ENCODE measurements at regions of chr9 and their contacts with region 1.

Region 1: GRCh38 chr9:91036826-91037510 is 235.3 kb downstream of the SYK start:
- DNase-seq: peak; percentile 66 to 82
- ATAC-seq: peak; percentile 95 to 98
- H3K4me3 ChIP-seq: no peak overlapping the region
- H3K27ac ChIP-seq: peak overlapping the region in 1 of 4 donors; percentile 20
- H3K4me1 ChIP-seq: peaks cover 4 to 17% of the 10 kb centered on the region in 2 donors
- H3K27me3 ChIP-seq: no peaks in the 10 kb centered on the region
- CTCF ChIP-seq: peak; percentile 63 to 85 (median 76)
- POLR2A ChIP-seq: no peak

Region 2: GRCh38 chr9:91117959-91118703 is 81.2 kb after region 1 on chr9:
- in situ Hi-C with region 1: no loop called
- intact Hi-C with region 1: loop called (anchors 5 kb)
- DNase-seq: peak; percentile 84 to 90
- ATAC-seq: peak; percentile 86 to 89
- H3K4me3 ChIP-seq: peak overlapping the region; percentile 41 to 50 (median 42)
- H3K27ac ChIP-seq: peak overlapping the region; percentile 80 to 90 (median 82)
- H3K4me1 ChIP-seq: peaks cover 25 to 32% of the 10 kb centered on the region in 2 donors
- H3K27me3 ChIP-seq: no peaks in the 10 kb centered on the region
- CTCF ChIP-seq: no peak
- POLR2A ChIP-seq: peak; percentile 55 to 70

Region 3: DNA sequence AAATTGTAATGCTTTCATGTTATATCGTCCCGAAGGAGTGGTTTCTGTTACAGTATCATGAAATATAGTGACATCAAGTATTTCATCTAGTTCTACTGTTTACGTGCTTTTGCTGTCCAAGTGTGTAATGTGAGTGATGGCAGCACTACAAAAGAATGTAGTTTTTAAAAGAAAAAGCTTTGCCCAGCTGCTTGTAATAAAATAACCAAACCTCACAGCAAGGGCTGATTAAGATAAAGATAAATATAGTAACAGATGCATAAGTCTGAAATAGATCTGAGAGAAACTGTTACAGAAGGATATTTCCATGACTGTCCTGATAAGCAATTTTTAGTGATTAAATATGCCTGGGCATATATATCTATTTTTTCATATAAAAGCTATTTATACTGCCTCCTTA is 218.4 kb after region 1 on chr9:
- in situ Hi-C with region 1: no loop called
- intact Hi-C with region 1: loop called (anchors 5 kb)
- DNase-seq: no peak
- ATAC-seq: no peak
- H3K4me3 ChIP-seq: no peak overlapping the region
- H3K27ac ChIP-seq: peak overlapping the region in 3 of 4 donors; percentile 15 to 51 (median 48)
- H3K4me1 ChIP-seq: peaks cover 16 to 22% of the 10 kb centered on the region in 2 donors
- H3K27me3 ChIP-seq: no peaks in the 10 kb centered on the region
- CTCF ChIP-seq: no peak
- POLR2A ChIP-seq: no peak

Region 4: DNA sequence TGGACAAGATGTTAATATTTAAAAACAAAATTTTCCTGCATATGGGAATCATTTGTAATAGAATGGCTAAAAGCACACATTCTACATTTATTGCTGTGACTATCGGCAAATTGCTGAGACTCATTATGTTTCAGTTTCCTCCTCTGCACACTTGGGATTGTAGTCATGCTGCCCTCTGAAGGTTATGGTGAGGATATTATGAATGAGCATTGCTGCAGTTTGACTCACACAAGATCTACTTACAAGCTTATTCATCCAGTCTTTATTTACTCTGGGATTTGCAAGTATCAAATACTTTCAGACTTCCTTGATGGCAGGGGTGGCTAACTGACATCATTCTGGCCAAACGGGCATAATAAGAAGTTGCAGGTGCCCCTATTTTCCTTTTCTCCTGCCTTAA is 396.2 kb after region 1 on chr9:
- in situ Hi-C with region 1: loop called (anchors 5 to 25 kb)
- intact Hi-C with region 1: no loop called
- DNase-seq: peak in 1 of 2 donors; percentile 31
- ATAC-seq: peak; percentile 98 to 100
- H3K4me3 ChIP-seq: no peak overlapping the region
- H3K27ac ChIP-seq: peak overlapping the region in 2 of 4 donors; percentile 28 to 48
- H3K4me1 ChIP-seq: no peaks in the 10 kb centered on the region
- H3K27me3 ChIP-seq: no peaks in the 10 kb centered on the region
- CTCF ChIP-seq: peak in 4 of 5 experiments; percentile 22 to 51 (median 30)
- POLR2A ChIP-seq: no peak

Region 5: DNA sequence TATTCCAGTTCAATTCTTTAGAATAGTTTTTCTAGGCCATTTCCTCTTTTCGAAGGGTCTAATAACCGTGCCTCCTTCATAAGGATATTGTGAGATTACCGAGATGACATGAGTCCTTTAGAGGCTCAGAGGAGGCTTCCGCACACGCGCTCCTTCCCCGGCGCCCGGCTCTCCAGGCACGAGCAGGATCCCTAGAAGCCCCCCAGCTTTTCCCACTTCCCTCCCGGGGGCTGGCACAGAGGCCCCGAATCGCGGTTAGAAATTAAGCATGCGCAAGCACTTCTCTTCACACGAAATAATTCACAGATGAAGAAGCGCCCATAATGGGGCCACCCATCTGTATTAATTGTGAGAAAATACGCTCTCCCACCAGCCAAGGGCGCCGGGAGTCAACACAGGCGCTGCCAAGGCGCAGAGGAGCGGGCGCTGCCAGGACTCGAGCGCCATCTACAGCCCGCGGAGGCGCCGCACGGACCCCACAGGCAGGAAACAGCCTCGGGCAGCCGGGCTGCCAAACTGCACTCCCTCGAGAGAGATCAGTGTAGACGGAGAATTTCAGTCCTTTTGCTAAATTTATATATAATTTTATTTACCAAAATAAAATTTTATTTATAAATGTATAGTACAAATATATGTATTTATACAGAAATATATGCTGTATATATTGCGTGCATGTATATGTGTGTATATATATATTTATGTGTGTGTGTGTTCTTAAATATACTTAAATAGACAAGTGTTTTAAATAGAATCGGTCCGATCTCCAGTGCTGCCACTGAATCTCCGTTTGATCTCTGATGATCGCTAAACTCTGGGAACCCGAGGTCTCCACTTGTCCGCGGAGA is 644.7 kb after region 1 on chr9:
- in situ Hi-C with region 1: loop called in 2 of 4 experiments (anchors 25 kb)
- intact Hi-C with region 1: loop called (anchors 5 kb)
- DNase-seq: peak; percentile 9 to 58
- ATAC-seq: peak in 1 of 2 donors; percentile 75
- H3K4me3 ChIP-seq: peak overlapping the region in 2 of 4 donors; percentile 17 to 34
- H3K27ac ChIP-seq: no peak overlapping the region
- H3K4me1 ChIP-seq: no peaks in the 10 kb centered on the region
- H3K27me3 ChIP-seq: no peaks in the 10 kb centered on the region
- CTCF ChIP-seq: peak; percentile 54 to 85 (median 74)
- POLR2A ChIP-seq: no peak

Region 6: GRCh38 chr9:91727316-91727861 is 690.4 kb after region 1 on chr9:
- in situ Hi-C with region 1: no loop called
- intact Hi-C with region 1: loop called (anchors 5 kb)
- DNase-seq: no peak
- ATAC-seq: peak; percentile 33 to 64
- H3K4me3 ChIP-seq: no peak overlapping the region
- H3K27ac ChIP-seq: no peak overlapping the region
- H3K4me1 ChIP-seq: no peaks in the 10 kb centered on the region
- H3K27me3 ChIP-seq: no peaks in the 10 kb centered on the region
- CTCF ChIP-seq: peak; percentile 37 to 71 (median 52)
- POLR2A ChIP-seq: no peak